Mammary epithelial cell (primary cell): ENCODE measurements at regions of chr1 and their contacts with region 1.

Region 1: GRCh38 chr1:163512349-163512989 is 190.7 kb downstream of the NUF2 start:
- DNase-seq: no peak
- H3K4me3 ChIP-seq: no peak overlapping the region
- H3K27ac ChIP-seq: no peak overlapping the region
- H3K4me1 ChIP-seq: no peaks in the 10 kb centered on the region
- H3K27me3 ChIP-seq: no peaks in the 10 kb centered on the region
- CTCF ChIP-seq: no peak

Region 2: DNA sequence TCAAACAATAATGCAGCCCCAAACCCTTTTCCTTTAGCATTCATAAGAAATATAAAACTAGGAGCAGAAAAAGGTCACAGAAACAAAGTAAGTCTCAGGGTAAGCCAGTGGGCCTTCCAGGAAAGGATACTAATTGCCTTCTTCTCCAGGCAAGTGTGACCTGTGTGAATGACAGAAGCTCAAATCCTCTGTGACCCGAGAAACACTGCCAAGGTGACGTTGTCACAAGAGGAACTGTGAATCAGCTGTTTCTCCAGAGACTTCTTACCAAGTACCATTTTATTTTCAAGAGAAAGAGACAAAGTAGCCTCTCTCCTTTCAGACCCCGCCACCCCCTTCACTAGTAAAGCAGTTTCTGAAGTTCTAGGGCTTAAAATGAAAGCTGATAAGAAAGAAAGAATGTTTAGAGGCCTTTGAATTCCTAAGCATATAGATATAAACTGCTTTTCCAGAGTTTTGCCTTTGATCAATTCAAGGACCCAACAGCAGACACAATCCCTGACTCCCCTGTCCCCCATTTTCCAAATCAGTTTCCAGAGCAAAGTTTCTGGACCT is 35.1 kb before region 1 on chr1:
- CTCF ChIA-PET with region 1: no interaction called
- dilution Hi-C with region 1: loop called (anchors 5 kb)
- in situ Hi-C with region 1: no loop called
- intact Hi-C with region 1: no loop called
- DNase-seq: no peak
- H3K4me3 ChIP-seq: no peak overlapping the region
- H3K27ac ChIP-seq: no peak overlapping the region
- H3K4me1 ChIP-seq: no peaks in the 10 kb centered on the region
- H3K27me3 ChIP-seq: peaks cover 2% of the 10 kb centered on the region
- CTCF ChIP-seq: no peak